K562 (cell line): ENCODE measurements at regions of chr1 and their contacts with region 1.

Region 1: GRCh38 chr1:26279456-26280332 is at the start of gene SH3BGRL3:
- DNase-seq: peak; percentile 93 to 96 (median 96)
- ATAC-seq: peak; percentile 87
- H3K4me3 ChIP-seq: peak within 1 kb of the TSS; percentile 47
- H3K27ac ChIP-seq: peak within 1 kb of the TSS; percentile 81
- H3K4me1 ChIP-seq: peaks cover 81 to 83% of the 10 kb centered on the region in 2 experiments
- H3K27me3 ChIP-seq: no peaks in the 10 kb centered on the region
- CTCF ChIP-seq: peak; percentile 66 to 83 (median 69)
- EP300 ChIP-seq: peak; percentile 13; the same call in 1 of the 2 replicates
- POLR2A ChIP-seq: peak; percentile 84
- RAD21 ChIP-seq: peak; percentile 35 to 40; a peak in 2 of 4 replicates
- polyA plus RNA-seq, gene SH3BGRL3: 106 to 137 TPM

Region 2: GRCh38 chr1:25675729-25676476 is 603.8 kb before region 1 on chr1:
- CTCF ChIA-PET with region 1: no interaction called
- POLR2A ChIA-PET with region 1: no interaction called
- in situ Hi-C with region 1: no loop called
- intact Hi-C with region 1: no loop called
- DNase-seq: no peak
- ATAC-seq: no peak
- H3K4me3 ChIP-seq: no peak overlapping the region
- H3K27ac ChIP-seq: no peak overlapping the region
- H3K4me1 ChIP-seq: no peaks in the 10 kb centered on the region
- H3K27me3 ChIP-seq: peaks cover 42 to 55% of the 10 kb centered on the region in 2 experiments
- CTCF ChIP-seq: no peak
- EP300 ChIP-seq: no peak
- POLR2A ChIP-seq: no peak
- RAD21 ChIP-seq: no peak

Region 3: GRCh38 chr1:26190373-26190987 is 89.2 kb before region 1 on chr1 and contains the start of gene CATSPER4:
- CTCF ChIA-PET with region 1: interaction called, 3 read pairs
- POLR2A ChIA-PET with region 1: interaction called, 4 read pairs
- in situ Hi-C with region 1: no loop called
- intact Hi-C with region 1: loop called (anchors 1 kb)
- DNase-seq: peak; percentile 73 to 75 (median 74)
- ATAC-seq: peak; percentile 87
- H3K4me3 ChIP-seq: no peak within 1 kb of the TSS
- H3K27ac ChIP-seq: no peak within 1 kb of the TSS
- H3K4me1 ChIP-seq: peaks cover 0 to 23% of the 10 kb centered on the region in 2 experiments; a peak in 2 of 5 replicates
- H3K27me3 ChIP-seq: no peaks in the 10 kb centered on the region
- CTCF ChIP-seq: peak; percentile 68 to 82 (median 74)
- EP300 ChIP-seq: no peak
- POLR2A ChIP-seq: no peak
- RAD21 ChIP-seq: peak; percentile 57 to 82
- polyA plus RNA-seq, gene CATSPER4: 0.04 TPM in 1 of 2 experiments, not detected in the other

Region 4: GRCh38 chr1:26268114-26268857 is 11.4 kb before region 1 on chr1:
- CTCF ChIA-PET with region 1: no interaction called
- POLR2A ChIA-PET with region 1: interaction called, 10 read pairs
- in situ Hi-C with region 1: no loop called
- intact Hi-C with region 1: no loop called
- DNase-seq: no peak
- ATAC-seq: no peak
- H3K4me3 ChIP-seq: no peak overlapping the region
- H3K27ac ChIP-seq: peak overlapping the region; percentile 20; the same call in 1 of the 3 replicates
- H3K4me1 ChIP-seq: no peaks in the 10 kb centered on the region; a peak in 1 of 5 replicates
- H3K27me3 ChIP-seq: no peaks in the 10 kb centered on the region
- CTCF ChIP-seq: no peak
- EP300 ChIP-seq: no peak
- POLR2A ChIP-seq: no peak
- RAD21 ChIP-seq: no peak